Activated naive CD4-positive, alpha-beta T cell treated with anti-CD3 and anti-CD28 coated beads, Interleukin-2, amount 10 ng/mL, durations not matched to agents 7 days and 5 days (primary cell): ENCODE measurements at regions of chr2 and their contacts with region 1.

Region 1: DNA sequence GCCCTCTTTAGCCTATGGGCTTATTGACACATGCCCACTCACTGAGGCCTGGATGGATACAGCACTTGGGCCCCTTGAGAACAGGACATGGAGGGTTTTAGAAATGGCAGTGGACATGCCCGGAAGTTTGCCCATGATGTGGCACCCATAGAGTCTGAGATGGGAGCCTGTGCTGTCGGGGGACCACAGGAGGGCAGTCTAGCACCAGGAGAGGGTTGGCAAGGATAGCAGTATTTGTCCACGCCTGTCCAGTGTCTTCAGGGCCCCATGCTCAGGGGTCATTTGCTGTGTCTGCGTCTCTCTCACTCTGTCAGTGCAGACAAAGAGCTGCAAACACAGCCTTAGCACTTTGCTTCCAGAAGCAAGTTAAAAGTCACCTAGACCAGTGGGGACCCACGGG is 48.7 kb downstream of the IL1RL2 start:
- DNase-seq: peak; percentile 56
- H3K4me3 Mint-ChIP-seq: no peak overlapping the region
- H3K27ac Mint-ChIP-seq: no peak overlapping the region
- H3K4me1 Mint-ChIP-seq: peaks cover 37% of the 10 kb centered on the region
- H3K27me3 Mint-ChIP-seq: peaks cover 3% of the 10 kb centered on the region

Region 2: DNA sequence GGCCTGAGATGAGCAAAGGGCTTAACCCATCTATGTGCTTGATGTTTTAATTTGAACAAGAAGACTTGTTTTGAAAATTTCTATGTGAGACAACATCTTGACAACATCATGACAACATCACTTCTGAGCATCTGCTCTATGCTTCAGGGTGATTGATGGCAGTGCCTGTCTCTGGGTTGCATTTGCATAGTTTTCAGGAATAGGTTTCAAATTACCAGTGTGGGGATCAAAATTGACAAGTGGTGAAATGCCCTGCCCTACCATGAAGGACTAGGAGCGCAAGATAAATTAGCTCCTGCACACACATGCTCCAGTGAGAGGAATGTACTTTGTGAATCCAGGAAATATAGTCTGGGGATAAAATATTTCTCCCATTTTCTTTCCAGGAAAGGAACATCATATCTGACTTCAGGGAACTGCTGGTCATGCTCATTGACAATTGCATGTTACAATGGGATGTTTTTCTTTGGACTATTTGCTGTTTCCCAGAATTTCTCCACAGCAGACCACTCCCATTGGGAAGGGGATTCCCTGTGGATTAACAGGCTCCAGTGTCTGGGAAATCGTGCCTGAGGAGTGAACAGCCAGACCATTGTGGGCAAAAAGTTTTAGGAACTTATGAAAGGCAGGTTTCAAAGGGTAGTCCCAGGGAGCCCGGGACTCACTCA is 289.0 kb before region 1 on chr2:
- CTCF ChIA-PET with region 1: no interaction called
- DNase-seq: no peak
- H3K4me3 Mint-ChIP-seq: no peak overlapping the region
- H3K27ac Mint-ChIP-seq: no peak overlapping the region
- H3K4me1 Mint-ChIP-seq: no peaks in the 10 kb centered on the region
- H3K27me3 Mint-ChIP-seq: no peaks in the 10 kb centered on the region

Region 3: GRCh38 chr2:102005989-102006885 is 229.3 kb before region 1 on chr2:
- CTCF ChIA-PET with region 1: interaction called, 52 read pairs
- DNase-seq: peak; percentile 44
- H3K4me3 Mint-ChIP-seq: no peak overlapping the region
- H3K27ac Mint-ChIP-seq: no peak overlapping the region
- H3K4me1 Mint-ChIP-seq: peaks cover 5% of the 10 kb centered on the region
- H3K27me3 Mint-ChIP-seq: peaks cover 7% of the 10 kb centered on the region

Region 4: GRCh38 chr2:102020596-102021181 is 214.8 kb before region 1 on chr2:
- CTCF ChIA-PET with region 1: interaction called, 73 read pairs
- DNase-seq: peak; percentile 88
- H3K4me3 Mint-ChIP-seq: no peak overlapping the region
- H3K27ac Mint-ChIP-seq: no peak overlapping the region
- H3K4me1 Mint-ChIP-seq: peaks cover 11% of the 10 kb centered on the region
- H3K27me3 Mint-ChIP-seq: no peaks in the 10 kb centered on the region

Region 5: DNA sequence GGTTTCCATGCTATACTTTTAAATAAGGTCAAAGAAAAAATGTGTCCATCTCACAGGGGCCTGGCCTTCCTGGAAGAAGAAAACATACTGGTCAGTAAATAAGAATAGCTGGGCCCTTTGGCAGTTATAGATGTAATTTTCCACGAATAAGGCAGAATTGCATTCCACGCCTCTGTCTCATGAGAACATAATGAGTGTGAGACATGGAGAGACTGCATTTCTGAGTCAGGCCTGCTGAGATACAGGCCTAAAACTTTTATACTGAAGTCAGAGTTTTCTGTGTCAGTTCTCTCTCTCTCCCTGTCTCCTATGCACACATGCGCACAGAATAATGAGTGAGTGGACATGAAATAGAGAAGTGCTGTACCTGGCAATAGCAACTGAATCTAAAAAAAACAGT is 113.4 kb before region 1 on chr2:
- CTCF ChIA-PET with region 1: no interaction called
- DNase-seq: no peak
- H3K4me3 Mint-ChIP-seq: no peak overlapping the region
- H3K27ac Mint-ChIP-seq: no peak overlapping the region
- H3K4me1 Mint-ChIP-seq: no peaks in the 10 kb centered on the region
- H3K27me3 Mint-ChIP-seq: peaks cover 5% of the 10 kb centered on the region

Region 6: GRCh38 chr2:102449370-102449974 is 214.0 kb after region 1 on chr2:
- CTCF ChIA-PET with region 1: interaction called, 55 read pairs
- DNase-seq: peak; percentile 82
- H3K4me3 Mint-ChIP-seq: no peak overlapping the region
- H3K27ac Mint-ChIP-seq: no peak overlapping the region
- H3K4me1 Mint-ChIP-seq: peaks cover 15% of the 10 kb centered on the region
- H3K27me3 Mint-ChIP-seq: no peaks in the 10 kb centered on the region